AG04449 (cell line): ENCODE measurements at regions of chr10 and their contacts with region 1.

Region 1: DNA sequence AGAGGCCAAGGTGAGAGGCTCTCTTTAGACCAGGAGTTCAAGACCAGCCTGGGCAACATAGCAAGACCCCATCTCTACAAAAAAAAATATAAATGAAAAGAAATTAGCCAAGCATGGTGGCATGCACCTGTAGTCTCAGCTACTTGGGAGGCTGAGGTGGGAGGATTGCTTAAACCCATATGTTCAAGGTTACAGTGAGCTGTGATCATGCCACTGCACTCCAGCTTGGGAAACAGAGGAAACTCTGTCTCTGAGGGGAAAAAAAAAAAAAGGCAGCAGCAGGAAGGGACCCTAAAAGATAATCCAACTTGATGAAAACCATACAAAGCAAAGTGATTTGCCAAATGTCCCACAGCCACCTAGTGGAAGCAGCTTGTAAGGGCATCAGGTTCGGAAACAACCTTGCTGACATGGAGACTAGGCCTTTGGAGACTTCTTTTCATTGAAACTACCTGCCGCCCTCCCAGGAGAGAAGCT is 15.6 kb upstream of the PBLD start:
- DNase-seq: no peak
- H3K4me3 ChIP-seq: no peak overlapping the region
- CTCF ChIP-seq: peak; percentile 86

Region 2: DNA sequence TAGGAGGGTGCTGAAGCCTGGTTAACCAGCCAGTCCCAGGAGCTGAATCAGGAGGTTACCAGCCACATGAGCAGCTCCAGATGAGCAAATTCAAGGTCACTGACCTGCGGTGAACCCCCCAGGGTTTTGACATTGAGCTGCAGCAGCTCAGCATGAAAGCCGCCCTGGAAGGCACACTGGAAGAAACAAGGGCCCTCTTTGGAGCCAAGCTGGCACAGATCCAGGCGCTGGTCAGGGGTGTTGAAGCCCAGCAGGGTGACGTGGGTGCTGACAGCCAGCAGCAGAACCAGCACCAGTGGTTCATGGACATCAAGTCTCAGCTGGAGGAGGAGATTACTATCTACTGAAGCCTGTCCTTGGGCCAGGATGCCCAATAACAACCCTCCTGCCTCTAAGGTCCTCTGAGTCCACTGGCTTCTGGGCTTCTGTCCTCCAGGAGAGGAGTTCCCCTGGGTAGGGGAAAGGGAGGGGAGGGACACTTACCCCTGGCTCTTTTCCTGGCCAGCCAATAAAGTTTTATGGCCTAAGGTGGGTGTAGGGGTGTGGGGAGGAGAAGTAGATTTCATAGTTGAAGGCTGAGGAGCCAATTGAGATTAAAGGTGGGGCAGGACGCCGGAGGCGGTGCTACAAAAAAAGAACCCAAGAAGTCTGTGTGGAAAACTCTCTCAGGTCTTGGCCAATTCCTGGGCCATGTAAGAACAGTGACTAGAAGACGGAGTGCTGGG is 87.0 kb before region 1 on chr10:
- CTCF ChIA-PET with region 1: no interaction called
- POLR2A ChIA-PET with region 1: no interaction called
- DNase-seq: no peak
- H3K4me3 ChIP-seq: no peak overlapping the region
- CTCF ChIP-seq: no peak

Region 3: DNA sequence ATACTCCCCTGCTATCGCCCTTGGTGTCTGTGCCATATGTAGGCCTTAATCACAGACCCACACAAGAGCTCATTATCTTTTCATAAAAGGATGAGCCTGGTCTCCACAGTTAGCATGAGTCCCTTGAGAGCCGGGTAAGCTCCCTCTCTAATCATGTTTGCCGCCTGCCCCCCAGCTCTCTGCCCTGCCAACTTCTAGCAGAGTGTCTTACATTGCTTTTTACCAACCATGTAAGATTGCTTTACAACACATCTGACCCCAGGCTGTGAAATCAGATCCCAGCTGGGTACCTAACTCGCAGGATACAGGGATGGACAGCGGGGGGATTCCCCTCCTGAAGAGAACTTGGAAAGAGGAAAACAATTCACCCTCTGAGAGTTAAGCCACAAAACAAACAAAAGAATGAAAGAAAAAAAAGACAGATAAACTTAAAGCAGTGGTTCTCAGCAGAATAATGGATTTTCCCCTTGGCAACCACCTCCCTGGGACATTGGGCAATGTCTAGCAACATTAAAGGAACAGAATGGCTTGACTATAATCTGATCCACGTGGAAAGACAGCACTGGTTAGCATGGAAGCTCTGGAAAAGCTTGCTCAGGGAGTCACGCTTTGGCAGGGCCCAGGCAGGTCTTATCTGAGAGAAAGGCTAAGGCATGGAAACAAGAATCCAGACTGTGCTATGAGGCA is 77.0 kb before region 1 on chr10:
- CTCF ChIA-PET with region 1: no interaction called
- POLR2A ChIA-PET with region 1: no interaction called
- DNase-seq: no peak
- H3K4me3 ChIP-seq: no peak overlapping the region
- CTCF ChIP-seq: no peak

Region 4: DNA sequence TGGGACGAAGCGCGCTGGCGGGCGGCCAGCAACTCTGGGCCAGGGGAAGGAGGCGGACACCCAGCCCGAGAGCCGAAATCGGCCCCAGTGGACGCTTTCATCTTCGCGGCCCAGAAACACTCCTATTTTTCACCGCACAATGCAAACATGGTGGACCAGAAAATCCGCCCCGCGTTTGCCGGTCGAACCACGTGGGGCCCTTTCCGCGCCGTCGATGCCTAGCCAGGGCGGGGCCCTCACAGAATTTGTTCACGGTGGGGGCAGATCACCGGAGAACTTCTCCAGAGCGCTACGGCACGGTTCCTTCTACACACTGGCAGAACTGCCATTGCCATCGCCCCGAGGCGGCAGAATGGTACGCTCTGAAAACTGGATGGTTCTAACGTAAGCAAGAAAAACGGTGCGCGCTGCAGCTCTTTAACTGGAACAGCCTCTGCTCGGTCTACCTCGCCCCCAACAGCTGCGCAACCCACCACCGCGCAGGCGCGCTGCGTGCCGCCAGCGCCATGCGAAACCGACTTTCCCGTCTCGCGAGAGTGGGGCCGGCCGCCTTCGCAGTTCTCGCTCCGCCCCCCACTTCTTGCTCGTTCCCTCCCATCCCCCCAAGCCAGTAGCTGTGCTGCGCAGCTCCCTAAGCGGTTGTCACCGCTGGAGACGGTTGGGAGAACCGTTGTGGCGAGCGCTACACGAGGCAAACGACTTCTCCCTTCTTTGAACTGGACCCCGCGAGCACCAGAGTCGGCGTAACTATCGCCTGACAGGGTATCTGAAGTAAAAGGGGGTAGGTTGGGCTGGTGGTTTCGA is 16.6 kb before region 1 on chr10 and contains the start of gene HNRNPH3:
- CTCF ChIA-PET with region 1: interaction called, 33 read pairs
- POLR2A ChIA-PET with region 1: no interaction called
- DNase-seq: peak; percentile 78
- H3K4me3 ChIP-seq: peak within 1 kb of the TSS; percentile 91
- CTCF ChIP-seq: no peak

Region 5: GRCh38 chr10:68364101-68364886 is 16.0 kb after region 1 on chr10:
- CTCF ChIA-PET with region 1: interaction called, 26 read pairs
- POLR2A ChIA-PET with region 1: no interaction called
- DNase-seq: no peak
- H3K4me3 ChIP-seq: no peak overlapping the region
- CTCF ChIP-seq: no peak